ENCODE measurements at regions of chr19 and their contacts with region 1.

Region 1: GRCh38 chr19:54481322-54481930 is 8.3 kb upstream of the CDC42EP5 start:
- DNase-seq: peak; percentile 70
- CTCF ChIP-seq: peak; percentile 76

Region 2: DNA sequence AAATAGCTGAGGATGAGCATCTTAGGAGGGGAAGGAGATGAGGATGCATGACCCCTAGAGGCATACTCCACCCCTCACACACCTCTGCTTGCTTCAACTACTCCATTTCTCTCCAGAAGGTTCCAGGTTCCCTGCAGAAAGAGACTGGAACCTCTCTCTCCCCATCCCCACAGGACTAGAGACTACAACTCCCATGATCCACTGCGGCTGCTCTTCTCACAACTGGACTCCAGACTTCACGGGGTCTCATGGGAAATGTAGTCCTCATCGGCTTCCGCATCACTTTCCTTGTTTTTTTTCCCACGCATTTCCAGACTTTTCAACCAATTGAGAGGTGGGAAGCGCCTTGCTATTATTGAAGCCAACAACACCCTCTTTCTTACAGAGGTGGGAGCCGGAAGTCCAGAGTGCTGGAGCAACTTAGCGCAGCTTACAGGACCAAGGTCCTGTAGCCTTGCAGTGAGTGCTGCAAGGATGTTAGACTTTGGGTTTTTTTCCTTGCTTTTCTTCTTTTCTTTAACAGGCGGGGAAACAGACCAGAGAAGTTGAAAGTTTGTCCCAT is 503.9 kb before region 1 on chr19:
- in situ Hi-C with region 1: no loop called
- DNase-seq: peak; percentile 68
- CTCF ChIP-seq: no peak

Region 3: GRCh38 chr19:54653181-54653809 is 171.9 kb after region 1 on chr19:
- in situ Hi-C with region 1: loop called (anchors 25 kb)
- DNase-seq: peak; percentile 65
- CTCF ChIP-seq: peak; percentile 45

Region 4: GRCh38 chr19:54905803-54906511 is 424.5 kb after region 1 on chr19 and contains the start of gene NCR1:
- in situ Hi-C with region 1: loop called (anchors 25 kb)
- DNase-seq: no peak
- CTCF ChIP-seq: no peak

Measured in GM13976 (cell line).